WTC11 (cell line): ENCODE measurements at regions of chr14 and their contacts with region 1.

Region 1: DNA sequence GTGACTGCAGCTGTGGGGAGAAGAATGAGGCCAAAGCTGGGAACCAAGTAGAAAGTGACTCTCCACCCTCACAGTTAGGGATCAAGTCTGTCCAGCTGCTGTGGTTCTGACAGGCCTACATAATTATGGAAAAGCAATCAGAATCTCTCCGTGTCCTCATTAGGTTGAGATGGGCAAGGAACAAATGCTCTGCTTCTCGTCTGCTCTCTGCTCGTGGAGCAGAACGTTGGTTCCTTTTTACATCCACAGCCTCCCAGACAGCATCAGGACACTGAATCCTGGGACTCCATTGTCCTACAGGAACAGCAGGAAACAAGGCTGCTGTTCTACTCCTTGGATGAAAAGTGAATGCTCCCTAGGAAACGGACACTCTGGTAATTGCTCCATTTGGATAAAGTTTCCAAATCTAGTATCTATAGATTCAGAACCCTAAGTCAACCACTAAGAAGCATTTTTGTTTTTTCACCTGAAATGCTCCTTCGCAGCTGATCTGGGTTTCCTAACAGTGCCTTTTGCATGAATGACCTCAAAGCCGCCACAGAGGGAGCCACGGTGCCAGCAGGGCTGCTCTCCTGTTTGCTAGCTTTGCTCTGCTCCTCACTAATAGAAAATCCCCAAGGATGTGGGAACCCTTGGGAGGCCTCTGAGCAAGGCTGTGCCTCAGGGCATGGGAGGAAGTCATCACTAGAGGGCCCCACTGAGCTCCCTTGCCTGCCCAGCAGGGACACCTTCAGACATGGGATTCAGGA is 102.0 kb downstream of the EGLN3 start:
- DNase-seq: peak; percentile 90
- ATAC-seq: peak; percentile 99
- H3K4me3 Mint-ChIP-seq: no peak overlapping the region
- H3K27ac Mint-ChIP-seq: no peak overlapping the region
- H3K4me1 Mint-ChIP-seq: peaks cover 38% of the 10 kb centered on the region
- H3K27me3 Mint-ChIP-seq: no peaks in the 10 kb centered on the region
- CTCF ChIP-seq: peak; percentile 71

Region 2: DNA sequence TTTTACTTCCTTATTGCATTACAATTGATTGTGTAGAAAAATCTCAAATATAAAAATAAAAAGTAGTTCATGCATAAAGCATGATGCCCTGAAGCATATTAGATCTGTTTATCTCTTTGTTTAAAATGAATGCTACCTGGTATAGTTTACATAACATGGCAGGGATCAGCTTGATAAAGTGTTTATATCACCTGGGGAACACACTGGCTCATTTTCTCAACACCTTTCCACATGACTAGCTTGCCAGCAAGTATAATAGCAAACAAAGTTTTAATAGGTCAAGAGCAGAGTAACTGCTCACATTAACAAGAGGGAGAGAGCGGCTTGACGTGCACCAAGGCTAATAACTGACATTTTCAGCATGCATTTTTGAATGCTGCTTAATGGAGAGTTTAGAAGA is 144.4 kb before region 1 on chr14:
- CTCF ChIA-PET with region 1: no interaction called
- POLR2A ChIA-PET with region 1: no interaction called
- DNase-seq: no peak
- ATAC-seq: no peak
- H3K4me3 Mint-ChIP-seq: no peak overlapping the region
- H3K27ac Mint-ChIP-seq: no peak overlapping the region
- H3K4me1 Mint-ChIP-seq: peaks cover 17% of the 10 kb centered on the region
- H3K27me3 Mint-ChIP-seq: no peaks in the 10 kb centered on the region
- CTCF ChIP-seq: no peak

Region 3: DNA sequence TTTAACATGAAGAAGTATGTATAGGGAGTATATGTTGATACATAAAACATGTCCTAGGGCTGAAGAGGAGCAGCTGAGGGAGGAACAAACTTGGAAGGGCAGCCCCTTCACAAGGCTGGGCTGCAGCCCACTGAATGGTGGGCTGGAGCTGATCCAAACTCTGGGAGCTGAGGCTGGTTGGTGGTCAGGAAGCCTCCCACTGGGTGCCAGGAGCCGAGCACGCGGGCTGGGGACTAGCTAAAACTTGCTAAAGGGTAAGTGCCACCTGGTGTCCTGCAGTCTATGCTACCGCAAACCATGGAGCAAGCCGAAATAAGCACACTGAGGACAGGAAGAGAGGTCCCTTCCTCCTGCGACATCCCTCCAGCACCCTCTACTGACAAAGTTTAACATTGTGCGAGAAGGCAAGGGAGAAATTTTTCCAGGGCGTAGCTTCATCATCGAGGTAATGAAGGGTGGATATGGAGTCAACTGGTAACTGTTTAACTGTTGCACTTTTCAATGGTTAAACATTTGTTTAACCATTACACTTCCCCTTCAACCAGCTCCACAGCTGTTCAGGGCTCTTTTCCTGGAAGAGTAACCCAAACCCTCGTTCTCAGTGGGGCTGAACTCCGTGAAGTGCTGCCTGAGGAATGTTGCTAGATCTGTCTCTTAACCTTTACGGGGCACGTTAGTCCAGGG is 59.8 kb after region 1 on chr14:
- CTCF ChIA-PET with region 1: interaction called, 31 read pairs
- POLR2A ChIA-PET with region 1: no interaction called
- DNase-seq: peak; percentile 26
- ATAC-seq: peak; percentile 83
- H3K4me3 Mint-ChIP-seq: no peak overlapping the region
- H3K27ac Mint-ChIP-seq: no peak overlapping the region
- H3K4me1 Mint-ChIP-seq: peaks cover 7% of the 10 kb centered on the region
- H3K27me3 Mint-ChIP-seq: no peaks in the 10 kb centered on the region
- CTCF ChIP-seq: no peak

Region 4: DNA sequence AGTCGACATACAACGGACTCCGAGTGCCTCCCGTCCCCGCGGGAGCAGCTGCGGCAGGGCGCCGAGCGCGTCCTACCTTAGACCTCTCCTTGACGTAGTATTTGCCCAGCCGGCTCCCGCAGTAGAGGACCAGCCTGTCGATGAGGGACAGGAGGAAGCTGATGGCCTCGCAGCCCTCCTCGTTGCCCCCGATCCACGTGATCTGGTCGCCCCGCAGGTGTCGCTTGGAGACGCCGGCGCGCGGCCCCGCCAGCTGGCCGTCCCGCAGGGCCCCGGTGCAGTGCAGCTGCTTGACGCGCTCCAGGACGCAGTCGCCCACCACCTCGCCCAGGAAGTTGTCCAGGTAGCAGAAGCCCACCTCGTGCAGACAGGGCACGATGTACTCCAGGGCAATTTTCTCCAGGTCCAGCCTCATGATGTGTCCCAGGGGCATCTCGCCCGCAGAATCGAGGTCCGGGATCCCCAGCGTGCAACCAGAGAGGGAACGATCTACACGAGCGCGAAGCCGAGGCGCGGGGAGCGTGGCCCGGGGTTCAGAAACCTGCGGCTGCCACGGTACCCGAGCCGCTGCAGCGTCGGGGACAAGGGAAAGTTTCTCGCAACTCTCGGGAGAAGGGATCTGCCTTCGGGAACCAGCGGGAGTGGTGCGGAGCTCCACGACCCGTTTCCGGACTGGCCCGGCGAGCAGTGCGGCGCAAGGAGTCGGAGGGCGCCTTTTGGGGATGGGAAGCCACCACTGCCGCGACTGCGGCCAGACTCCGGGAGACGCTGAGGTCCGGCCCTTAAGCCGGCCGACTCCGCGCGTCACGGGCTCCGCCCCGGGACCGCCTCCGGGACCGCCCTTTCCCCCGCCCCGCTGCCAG is 101.7 kb after region 1 on chr14 and contains the start of gene EGLN3:
- CTCF ChIA-PET with region 1: interaction called, 26 read pairs
- POLR2A ChIA-PET with region 1: interaction called, 3 read pairs
- DNase-seq: peak; percentile 95
- ATAC-seq: peak; percentile 95
- H3K4me3 Mint-ChIP-seq: peak within 1 kb of the TSS; percentile 64
- H3K27ac Mint-ChIP-seq: peak within 1 kb of the TSS; percentile 95
- H3K4me1 Mint-ChIP-seq: peaks cover 50% of the 10 kb centered on the region
- H3K27me3 Mint-ChIP-seq: peaks cover 18% of the 10 kb centered on the region
- CTCF ChIP-seq: no peak
- total RNA-seq, gene EGLN3: 20.0 to 22.0 TPM (median 21.0 TPM) in 3 replicates

Region 5: GRCh38 chr14:34059855-34060638 is 211.2 kb after region 1 on chr14:
- CTCF ChIA-PET with region 1: interaction called, 10 read pairs
- POLR2A ChIA-PET with region 1: no interaction called
- DNase-seq: peak; percentile 74
- ATAC-seq: peak; percentile 92
- H3K4me3 Mint-ChIP-seq: peak overlapping the region; percentile 84
- H3K27ac Mint-ChIP-seq: no peak overlapping the region
- H3K4me1 Mint-ChIP-seq: peaks cover 15% of the 10 kb centered on the region
- H3K27me3 Mint-ChIP-seq: peaks cover 26% of the 10 kb centered on the region
- CTCF ChIP-seq: no peak

Region 6: DNA sequence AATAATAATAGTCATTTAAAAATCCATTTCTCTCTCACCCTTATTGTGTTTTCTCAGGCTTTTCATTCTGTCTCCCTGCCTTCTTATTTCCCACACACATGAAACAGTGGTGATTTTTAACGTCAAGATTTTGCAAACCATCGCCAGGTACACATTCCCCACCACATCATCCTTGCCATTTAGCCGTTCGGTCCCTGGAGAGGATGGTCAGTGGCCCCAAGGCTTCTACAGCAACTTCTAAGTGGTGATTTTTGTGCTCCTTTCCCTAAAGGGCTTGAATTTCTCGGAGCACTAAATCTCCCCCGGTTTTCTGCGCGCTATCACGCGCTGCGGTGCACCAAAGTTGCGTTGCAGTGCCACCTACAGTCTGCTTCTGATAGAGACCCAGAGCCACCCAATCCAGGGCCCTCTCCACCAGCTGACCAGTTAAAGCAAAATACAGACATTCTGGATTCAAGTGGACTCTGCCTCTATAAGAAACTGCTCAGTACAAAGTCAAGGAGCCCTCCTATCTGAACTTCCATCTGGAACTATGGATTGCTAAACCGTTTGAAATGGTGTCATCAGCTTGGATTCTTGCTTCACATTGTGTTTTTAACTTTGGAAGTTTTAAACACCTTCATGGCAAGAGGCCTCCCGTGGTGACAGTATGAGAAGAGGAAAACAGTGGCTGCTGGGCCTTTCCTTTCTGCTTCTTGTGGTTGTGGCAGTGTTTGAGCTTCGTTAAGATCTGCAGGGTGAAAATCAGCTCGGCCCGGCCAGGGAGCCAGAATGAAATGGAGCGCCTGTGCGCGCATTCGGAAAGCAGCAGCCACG is 379.2 kb after region 1 on chr14:
- CTCF ChIA-PET with region 1: interaction called, 21 read pairs
- POLR2A ChIA-PET with region 1: no interaction called
- DNase-seq: peak; percentile 69
- ATAC-seq: peak; percentile 91
- H3K4me3 Mint-ChIP-seq: peak overlapping the region; percentile 43
- H3K27ac Mint-ChIP-seq: no peak overlapping the region
- H3K4me1 Mint-ChIP-seq: peaks cover 12% of the 10 kb centered on the region
- H3K27me3 Mint-ChIP-seq: peaks cover 7% of the 10 kb centered on the region
- CTCF ChIP-seq: peak; percentile 58